ENCODE measurements at regions of chr5 and their contacts with region 1.

Region 1: GRCh38 chr5:128083033-128083810 is at the start of gene SLC12A2:
- DNase-seq: peak; percentile 96
- total RNA-seq, gene SLC12A2: 21.6 TPM

Region 2: DNA sequence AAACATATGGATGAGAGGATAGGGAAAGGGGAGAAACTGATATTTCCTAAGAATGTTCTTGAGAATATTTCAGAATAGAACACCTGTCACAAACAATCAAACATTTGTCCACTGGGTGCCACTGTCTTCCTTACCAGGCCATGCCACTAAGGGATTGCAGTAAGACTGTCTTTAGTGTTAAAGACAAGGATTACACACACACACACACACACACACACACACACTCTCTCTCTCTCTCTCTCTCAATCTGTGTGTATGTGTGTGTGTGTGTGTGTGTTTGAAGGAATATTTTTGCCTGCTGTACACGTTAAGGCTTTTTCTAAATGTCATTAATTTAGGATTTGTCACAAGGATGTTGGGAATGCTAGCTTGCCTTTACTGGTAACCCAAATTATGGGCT is 325.6 kb before region 1 on chr5:
- intact Hi-C with region 1: loop called (anchors 5 kb)
- DNase-seq: no peak

Region 3: GRCh38 chr5:127909078-127909477 is 174.1 kb before region 1 on chr5:
- intact Hi-C with region 1: loop called (anchors 10 kb)
- DNase-seq: no peak

Region 4: DNA sequence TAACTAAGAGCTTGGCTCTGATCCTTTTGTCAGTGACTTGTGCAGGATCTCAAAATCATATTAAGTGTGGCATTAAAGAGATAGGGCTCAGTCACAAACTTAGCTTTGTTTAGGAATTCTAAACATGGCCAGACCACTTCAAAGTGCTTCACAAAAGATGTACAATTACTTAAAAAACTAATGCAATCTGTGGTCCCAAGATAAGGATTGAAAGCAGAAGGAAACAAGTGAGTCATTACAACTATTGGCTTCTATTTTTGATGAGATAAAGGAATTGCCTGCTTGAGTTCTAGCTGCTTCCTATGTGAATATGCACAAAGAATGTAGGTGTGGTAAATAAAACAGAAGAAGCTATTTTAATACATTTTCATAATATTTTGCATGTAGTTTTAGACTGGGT is 44.6 kb before region 1 on chr5:
- intact Hi-C with region 1: loop called (anchors 5 kb)
- DNase-seq: no peak

Region 5: DNA sequence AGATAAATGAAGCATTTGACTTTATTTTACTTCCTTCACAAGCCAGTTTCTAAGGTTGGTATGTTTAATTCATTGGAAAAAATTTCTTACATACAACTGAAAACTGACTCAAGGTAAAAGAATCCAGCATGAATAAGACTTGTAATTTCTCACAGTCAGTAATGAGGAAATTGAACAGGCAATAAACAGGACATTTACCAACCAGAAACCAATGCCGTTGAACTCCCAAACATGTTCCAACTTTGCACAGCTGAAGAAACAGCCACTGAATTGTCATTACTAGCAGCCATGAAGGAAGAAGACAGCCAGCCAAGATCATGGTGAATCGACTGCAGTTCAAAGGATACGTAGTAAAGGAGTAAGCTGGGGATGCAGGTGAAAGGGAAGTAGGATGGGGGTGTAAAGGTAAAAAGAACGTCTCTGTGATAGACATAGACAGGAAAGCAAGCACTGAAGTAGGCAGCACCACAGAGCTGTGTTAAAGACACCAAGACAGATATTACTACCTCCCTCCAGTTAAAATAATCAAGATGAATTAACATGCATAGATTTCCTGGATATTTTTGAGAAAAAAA is 21.0 kb before region 1 on chr5:
- intact Hi-C with region 1: no loop called
- DNase-seq: no peak

Region 6: DNA sequence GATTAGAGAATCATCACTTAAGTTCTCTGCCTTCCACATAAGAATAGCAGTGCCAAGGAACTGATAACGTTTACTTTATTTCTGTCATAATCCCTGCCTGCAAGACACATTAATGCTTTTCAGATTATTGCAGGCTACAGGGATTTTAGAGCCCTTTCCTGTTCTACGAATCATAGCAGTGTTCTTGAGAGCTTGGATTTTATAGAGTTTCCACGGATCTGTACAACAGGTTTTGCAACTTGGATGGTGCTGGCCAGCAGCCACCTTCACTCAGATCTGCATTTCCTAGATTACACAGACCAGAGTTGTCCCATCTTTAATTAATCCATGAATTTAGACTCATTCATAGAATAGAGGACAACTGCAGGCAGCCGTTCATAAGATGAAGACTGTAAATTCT is 38.4 kb after region 1 on chr5:
- intact Hi-C with region 1: no loop called
- DNase-seq: no peak

Region 7: DNA sequence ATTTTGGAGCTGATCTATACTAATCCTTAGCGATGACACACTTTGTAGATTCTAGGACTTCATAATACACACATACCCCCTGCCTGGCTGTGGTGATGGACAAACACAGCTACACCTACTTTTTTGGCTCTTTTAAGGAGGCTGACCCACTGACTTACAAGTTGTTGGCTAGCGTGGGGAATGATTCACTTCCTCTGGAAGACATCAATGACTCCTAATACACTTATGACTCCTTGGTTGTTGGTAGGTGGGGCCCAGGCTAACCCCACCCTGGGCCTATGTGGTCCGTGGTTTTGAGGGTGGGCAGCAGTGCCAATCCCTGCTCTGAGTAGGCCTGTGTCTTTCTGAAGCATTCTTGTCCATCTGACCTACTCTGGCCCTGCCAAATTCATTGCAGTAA is 144.8 kb after region 1 on chr5:
- intact Hi-C with region 1: no loop called
- DNase-seq: no peak